Activated naive CD4-positive, alpha-beta T cell treated with anti-CD3 and anti-CD28 coated beads for 36 hours (primary cell): ENCODE measurements at regions of chr11 and their contacts with region 1.

Region 1: DNA sequence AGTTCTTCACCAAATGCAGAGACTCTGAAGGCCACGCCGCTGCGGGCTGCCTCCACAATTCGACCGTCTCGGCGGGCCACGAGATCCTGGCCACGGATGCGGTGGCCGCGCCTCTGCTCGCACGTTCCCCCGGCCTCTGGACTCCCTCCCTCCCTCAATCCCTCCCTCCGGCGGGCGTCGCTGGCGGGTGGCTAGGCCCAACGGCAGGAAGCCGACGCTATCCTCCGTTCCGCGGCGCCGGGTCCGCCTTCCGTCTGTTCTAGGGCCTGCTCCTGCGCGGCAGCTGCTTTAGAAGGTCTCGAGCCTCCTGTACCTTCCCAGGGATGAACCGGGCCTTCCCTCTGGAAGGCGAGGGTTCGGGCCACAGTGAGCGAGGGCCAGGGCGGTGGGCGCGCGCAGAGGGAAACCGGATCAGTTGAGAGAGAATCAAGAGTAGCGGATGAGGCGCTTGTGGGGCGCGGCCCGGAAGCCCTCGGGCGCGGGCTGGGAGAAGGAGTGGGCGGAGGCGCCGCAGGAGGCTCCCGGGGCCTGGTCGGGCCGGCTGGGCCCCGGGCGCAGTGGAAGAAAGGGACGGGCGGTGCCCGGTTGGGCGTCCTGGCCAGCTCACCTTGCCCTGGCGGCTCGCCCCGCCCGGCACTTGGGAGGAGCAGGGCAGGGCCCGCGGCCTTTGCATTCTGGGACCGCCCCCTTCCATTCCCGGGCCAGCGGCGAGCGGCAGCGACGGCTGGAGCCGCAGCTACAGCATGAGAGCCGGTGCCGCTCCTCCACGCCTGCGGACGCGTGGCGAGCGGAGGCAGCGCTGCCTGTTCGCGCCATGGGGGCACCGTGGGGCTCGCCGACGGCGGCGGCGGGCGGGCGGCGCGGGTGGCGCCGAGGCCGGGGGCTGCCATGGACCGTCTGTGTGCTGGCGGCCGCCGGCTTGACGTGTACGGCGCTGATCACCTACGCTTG is at the start of gene FUT4:
- DNase-seq: peak; percentile 80
- H3K4me3 Mint-ChIP-seq: peak within 1 kb of the TSS; percentile 100
- H3K27ac Mint-ChIP-seq: peak within 1 kb of the TSS; percentile 98
- H3K4me1 Mint-ChIP-seq: peaks cover 32% of the 10 kb centered on the region
- H3K27me3 Mint-ChIP-seq: no peaks in the 10 kb centered on the region
- total RNA-seq, gene FUT4: 2.8 to 2.9 TPM

Region 2: DNA sequence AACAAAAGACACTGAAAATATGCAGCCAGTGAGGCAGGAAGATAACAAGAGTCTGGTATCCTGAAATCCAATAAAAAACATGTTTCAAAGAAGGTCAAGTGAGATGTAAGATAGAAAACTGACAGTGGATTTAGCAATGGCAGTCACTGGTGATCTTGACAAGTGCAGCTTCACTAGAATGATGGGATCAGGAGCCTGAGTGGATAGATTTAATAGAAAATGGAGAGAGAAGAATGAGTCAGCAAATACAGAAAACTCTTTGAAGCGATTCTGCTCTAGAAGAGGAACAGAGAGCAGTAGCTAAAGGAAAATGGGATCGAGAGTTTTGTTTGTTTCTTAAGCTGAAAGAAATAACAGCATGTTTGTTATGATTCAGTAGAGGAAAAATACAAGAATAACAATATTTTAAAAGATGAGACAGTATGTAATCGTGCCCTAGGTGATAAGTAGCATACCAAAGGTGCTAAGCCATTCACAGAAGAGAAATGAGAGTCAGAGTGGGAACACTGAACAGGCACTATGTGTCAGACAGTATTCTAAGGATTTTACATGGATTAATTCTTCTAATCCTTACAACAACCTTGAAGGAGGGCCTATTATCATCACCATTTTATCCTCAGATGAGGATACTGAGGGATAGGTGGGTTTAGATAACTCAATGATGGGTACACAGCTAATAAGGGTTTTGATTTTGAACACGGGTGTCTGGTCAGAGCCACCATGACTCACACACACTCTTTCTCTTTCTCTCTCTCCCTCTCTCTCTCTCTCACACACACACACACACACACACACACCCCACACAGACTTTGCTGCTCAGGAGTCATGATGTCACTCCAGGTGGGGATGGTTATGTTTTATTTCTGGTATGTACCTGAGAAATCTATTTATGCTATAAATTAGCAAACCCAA is 86.6 kb before region 1 on chr11:
- CTCF ChIA-PET with region 1: no interaction called
- intact Hi-C with region 1: no loop called
- DNase-seq: no peak
- H3K4me3 Mint-ChIP-seq: no peak overlapping the region
- H3K27ac Mint-ChIP-seq: no peak overlapping the region
- H3K4me1 Mint-ChIP-seq: no peaks in the 10 kb centered on the region
- H3K27me3 Mint-ChIP-seq: no peaks in the 10 kb centered on the region

Region 3: DNA sequence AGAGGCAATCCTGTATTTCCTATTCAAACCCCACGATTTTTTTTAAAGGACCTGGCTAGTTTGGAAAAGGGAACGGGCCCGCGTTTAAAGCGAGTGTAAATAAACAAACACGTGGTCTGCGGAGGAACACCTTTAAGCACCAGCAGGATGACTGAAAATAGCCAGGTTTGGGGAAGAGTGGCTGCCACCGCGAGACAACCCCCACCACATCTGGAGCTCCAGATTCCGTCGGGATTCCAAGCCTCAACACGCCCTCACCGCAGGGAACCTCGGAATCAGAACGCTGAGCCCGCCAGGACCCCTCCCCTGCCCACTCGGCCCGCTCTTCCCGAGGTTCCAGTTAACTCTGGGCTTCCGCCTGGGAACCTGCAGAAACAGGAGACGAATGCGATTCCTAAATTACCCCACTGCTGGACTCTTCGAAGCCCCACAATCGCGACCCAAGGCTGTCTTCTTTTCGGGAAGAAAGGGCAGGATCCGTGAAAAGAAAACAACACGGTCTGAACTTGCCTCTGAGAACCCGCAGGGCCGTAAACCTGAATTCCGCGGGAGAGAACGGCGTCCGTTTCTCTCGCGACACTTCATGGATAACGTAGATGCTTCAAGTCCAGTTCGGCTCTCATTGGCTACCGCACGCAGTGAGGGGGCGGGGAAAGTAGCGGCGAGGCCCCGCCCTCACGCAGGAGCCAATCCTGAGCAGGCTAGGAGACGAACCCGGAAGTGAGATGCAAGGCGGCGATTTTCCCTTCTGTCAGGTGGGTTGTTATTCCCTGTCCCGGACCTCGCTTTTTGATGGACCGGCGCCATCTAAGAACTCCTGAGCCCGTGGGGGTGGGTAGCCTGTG is 50.5 kb before region 1 on chr11 and contains the starts of genes ANKRD49 and MRE11:
- CTCF ChIA-PET with region 1: no interaction called
- intact Hi-C with region 1: loop called (anchors 1 kb)
- DNase-seq: peak; percentile 97
- H3K4me3 Mint-ChIP-seq: peak within 1 kb of the TSS; percentile 93
- H3K27ac Mint-ChIP-seq: peak within 1 kb of the TSS; percentile 95
- H3K4me1 Mint-ChIP-seq: peaks cover 25% of the 10 kb centered on the region
- H3K27me3 Mint-ChIP-seq: no peaks in the 10 kb centered on the region
- total RNA-seq, gene ANKRD49: 16.3 to 19.1 TPM
- total RNA-seq, gene MRE11: 33.1 to 37.3 TPM

Region 4: GRCh38 chr11:94583866-94584500 is 40.0 kb after region 1 on chr11:
- CTCF ChIA-PET with region 1: no interaction called
- intact Hi-C with region 1: loop called (anchors 1 kb)
- DNase-seq: no peak
- H3K4me3 Mint-ChIP-seq: no peak overlapping the region
- H3K27ac Mint-ChIP-seq: no peak overlapping the region
- H3K4me1 Mint-ChIP-seq: peaks cover 14% of the 10 kb centered on the region
- H3K27me3 Mint-ChIP-seq: no peaks in the 10 kb centered on the region